Ascending aorta (tissue), 2 donors: ENCODE measurements at regions of chr16 and their contacts with region 1.

Region 1: GRCh38 chr16:1408171-1408837 is 6.2 kb downstream of the UNKL start:
- DNase-seq: peak; percentile 71 to 97
- H3K4me3 ChIP-seq: peak overlapping the region; percentile 42 to 64
- H3K27ac ChIP-seq: peak overlapping the region; percentile 29 to 54
- H3K4me1 ChIP-seq: peaks cover 0 to 5% of the 10 kb centered on the region in 2 donors
- H3K27me3 ChIP-seq: no peaks in the 10 kb centered on the region
- CTCF ChIP-seq: no peak

Region 2: GRCh38 chr16:1308977-1309885 is 99.1 kb before region 1 on chr16 and contains the start of gene UBE2I:
- intact Hi-C with region 1: loop called (anchors 5 kb)
- DNase-seq: peak; percentile 86 to 98
- H3K4me3 ChIP-seq: peak within 1 kb of the TSS; percentile 83 to 91
- H3K27ac ChIP-seq: peak within 1 kb of the TSS; percentile 96 to 99
- H3K4me1 ChIP-seq: peaks cover 21 to 24% of the 10 kb centered on the region in 2 donors
- H3K27me3 ChIP-seq: no peaks in the 10 kb centered on the region
- CTCF ChIP-seq: no peak
- total RNA-seq, gene UBE2I: 141 TPM

Region 3: DNA sequence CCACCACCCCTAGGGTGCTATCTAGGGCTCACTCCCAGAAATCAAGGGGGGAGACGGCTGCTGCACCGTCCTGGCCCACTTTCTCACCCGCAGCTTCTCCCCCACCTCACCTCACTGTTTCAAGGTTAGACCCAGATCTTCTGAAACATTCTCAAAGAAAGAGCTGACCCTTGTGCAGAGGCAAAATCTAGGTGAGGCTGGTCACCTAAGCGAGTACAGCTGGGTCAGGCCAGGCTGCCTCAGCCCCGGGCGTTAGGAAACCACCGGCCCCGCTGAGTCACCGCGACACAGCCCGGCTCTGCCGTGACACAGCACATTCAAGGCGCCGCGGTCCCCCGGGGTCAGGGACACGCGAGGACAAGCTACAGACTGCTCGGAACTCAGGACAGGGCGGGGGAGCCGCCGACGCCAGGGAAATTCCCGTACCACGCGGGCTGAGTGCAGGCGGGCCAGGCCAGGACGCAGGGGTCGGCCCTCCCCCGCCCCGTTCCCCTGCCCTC is 29.4 kb before region 1 on chr16:
- intact Hi-C with region 1: loop called (anchors 2 kb)
- DNase-seq: peak; percentile 73 to 93
- H3K4me3 ChIP-seq: peak overlapping the region; percentile 60 to 73
- H3K27ac ChIP-seq: peak overlapping the region; percentile 88 to 92
- H3K4me1 ChIP-seq: peaks cover 11 to 15% of the 10 kb centered on the region in 2 donors
- H3K27me3 ChIP-seq: no peaks in the 10 kb centered on the region
- CTCF ChIP-seq: no peak

Region 4: GRCh38 chr16:2673066-2673999 is 1265.0 kb after region 1 on chr16:
- intact Hi-C with region 1: loop called (anchors 10 kb)
- DNase-seq: peak; percentile 85 to 97
- H3K4me3 ChIP-seq: peak overlapping the region; percentile 67 to 83
- H3K27ac ChIP-seq: peak overlapping the region; percentile 66 to 75
- H3K4me1 ChIP-seq: peaks cover 0 to 14% of the 10 kb centered on the region in 2 donors
- H3K27me3 ChIP-seq: no peaks in the 10 kb centered on the region
- CTCF ChIP-seq: no peak